ENCODE measurements at regions of chrX and their contacts with region 1.

Region 1: GRCh38 chrX:68196939-68197791 is 236.1 kb downstream of the OPHN1 start:
- DNase-seq: peak; percentile 57
- H3K4me3 ChIP-seq: no peak overlapping the region
- H3K27ac ChIP-seq: no peak overlapping the region
- H3K4me1 ChIP-seq: no peaks in the 10 kb centered on the region
- H3K27me3 ChIP-seq: no peaks in the 10 kb centered on the region
- CTCF ChIP-seq: peak; percentile 76 to 86

Region 2: GRCh38 chrX:67872958-67873357 is 324.2 kb before region 1 on chrX:
- CTCF ChIA-PET with region 1: no interaction called
- dilution Hi-C with region 1: no loop called
- in situ Hi-C with region 1: no loop called
- intact Hi-C with region 1: no loop called
- DNase-seq: no peak
- H3K4me3 ChIP-seq: no peak overlapping the region
- H3K27ac ChIP-seq: no peak overlapping the region
- H3K4me1 ChIP-seq: no peaks in the 10 kb centered on the region
- H3K27me3 ChIP-seq: no peaks in the 10 kb centered on the region
- CTCF ChIP-seq: no peak

Region 3: GRCh38 chrX:68332201-68332731 is 135.1 kb after region 1 on chrX:
- CTCF ChIA-PET with region 1: no interaction called
- dilution Hi-C with region 1: no loop called
- in situ Hi-C with region 1: no loop called
- intact Hi-C with region 1: no loop called
- DNase-seq: no peak
- H3K4me3 ChIP-seq: no peak overlapping the region
- H3K27ac ChIP-seq: no peak overlapping the region
- H3K4me1 ChIP-seq: no peaks in the 10 kb centered on the region
- H3K27me3 ChIP-seq: no peaks in the 10 kb centered on the region
- CTCF ChIP-seq: no peak

Region 4: GRCh38 chrX:68462653-68463052 is 265.5 kb after region 1 on chrX:
- CTCF ChIA-PET with region 1: no interaction called
- dilution Hi-C with region 1: no loop called
- in situ Hi-C with region 1: no loop called
- intact Hi-C with region 1: loop called (anchors 1 kb)
- DNase-seq: no peak
- H3K4me3 ChIP-seq: no peak overlapping the region
- H3K27ac ChIP-seq: no peak overlapping the region
- H3K4me1 ChIP-seq: no peaks in the 10 kb centered on the region
- H3K27me3 ChIP-seq: no peaks in the 10 kb centered on the region
- CTCF ChIP-seq: peak; percentile 38

Region 5: GRCh38 chrX:68498508-68499379 is 301.6 kb after region 1 on chrX and contains the start of gene YIPF6:
- CTCF ChIA-PET with region 1: no interaction called
- dilution Hi-C with region 1: no loop called
- in situ Hi-C with region 1: loop called (anchors 10 kb)
- intact Hi-C with region 1: loop called (anchors 2 kb)
- DNase-seq: peak; percentile 63
- H3K4me3 ChIP-seq: peak within 1 kb of the TSS; percentile 57 to 79 (median 59)
- H3K27ac ChIP-seq: peak within 1 kb of the TSS; percentile 86
- H3K4me1 ChIP-seq: peaks cover 5% of the 10 kb centered on the region
- H3K27me3 ChIP-seq: no peaks in the 10 kb centered on the region
- CTCF ChIP-seq: no peak
- total RNA-seq, gene YIPF6: 31.9 to 42.8 TPM

Region 6: GRCh38 chrX:68511255-68511654 is 314.1 kb after region 1 on chrX:
- CTCF ChIA-PET with region 1: no interaction called
- dilution Hi-C with region 1: no loop called
- in situ Hi-C with region 1: loop called in 1 of 2 experiments (anchors 10 kb)
- intact Hi-C with region 1: loop called (anchors 1 kb)
- DNase-seq: peak; percentile 32
- H3K4me3 ChIP-seq: no peak overlapping the region
- H3K27ac ChIP-seq: no peak overlapping the region
- H3K4me1 ChIP-seq: no peaks in the 10 kb centered on the region
- H3K27me3 ChIP-seq: no peaks in the 10 kb centered on the region
- CTCF ChIP-seq: peak; percentile 85 to 86

Region 7: DNA sequence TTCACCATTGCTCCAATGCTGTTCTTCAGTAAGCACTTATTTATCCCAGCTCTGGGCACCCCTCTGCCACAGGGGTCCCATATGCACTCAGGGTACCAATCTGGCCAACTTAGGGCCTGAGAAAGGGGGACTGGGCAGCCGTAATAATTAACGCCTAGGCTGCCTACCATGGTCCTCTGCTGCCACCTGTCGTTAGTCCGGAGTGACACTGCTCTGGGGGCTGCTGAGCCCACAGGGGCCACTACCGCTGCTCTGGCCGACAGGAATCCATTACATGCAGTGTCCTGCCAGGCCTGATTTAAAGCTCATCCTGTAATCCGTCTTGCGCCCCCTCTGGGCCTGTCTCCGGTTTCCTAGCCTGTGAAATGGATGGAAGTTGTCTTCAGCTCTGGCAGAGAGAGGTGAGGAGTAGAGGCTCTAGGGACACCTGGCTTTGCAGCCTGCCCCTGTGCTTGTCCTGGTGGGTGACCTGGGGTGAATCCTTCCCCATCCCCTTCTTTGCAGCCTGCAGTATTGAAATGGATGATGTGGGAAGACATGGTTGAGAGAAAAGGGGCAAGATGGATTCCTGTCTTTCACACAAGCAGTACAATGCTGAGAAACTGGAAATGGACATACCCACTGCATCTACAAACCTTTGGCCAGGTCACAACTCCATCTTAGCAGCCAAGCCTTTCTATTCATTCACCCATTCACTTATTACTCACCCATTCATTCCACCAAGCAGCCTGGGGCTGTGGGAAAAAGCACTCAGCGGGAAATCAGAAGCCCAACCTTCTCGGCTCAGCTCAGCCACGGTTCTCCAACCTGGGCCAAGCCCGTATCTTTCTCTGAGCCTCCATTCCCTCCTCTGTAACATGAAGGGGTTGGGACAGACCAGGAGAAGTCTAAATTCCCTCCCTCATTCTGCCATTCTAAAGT is 1190.7 kb after region 1 on chrX:
- CTCF ChIA-PET with region 1: no interaction called
- dilution Hi-C with region 1: no loop called
- in situ Hi-C with region 1: no loop called
- intact Hi-C with region 1: loop called (anchors 5 kb)
- DNase-seq: peak; percentile 8
- H3K4me3 ChIP-seq: no peak overlapping the region
- H3K27ac ChIP-seq: no peak overlapping the region
- H3K4me1 ChIP-seq: peaks cover 9% of the 10 kb centered on the region
- H3K27me3 ChIP-seq: no peaks in the 10 kb centered on the region
- CTCF ChIP-seq: peak; percentile 64 to 85

Measured in mammary epithelial cell (primary cell).